GM10248 (cell line): ENCODE measurements at regions of chr3 and their contacts with region 1.

Region 1: DNA sequence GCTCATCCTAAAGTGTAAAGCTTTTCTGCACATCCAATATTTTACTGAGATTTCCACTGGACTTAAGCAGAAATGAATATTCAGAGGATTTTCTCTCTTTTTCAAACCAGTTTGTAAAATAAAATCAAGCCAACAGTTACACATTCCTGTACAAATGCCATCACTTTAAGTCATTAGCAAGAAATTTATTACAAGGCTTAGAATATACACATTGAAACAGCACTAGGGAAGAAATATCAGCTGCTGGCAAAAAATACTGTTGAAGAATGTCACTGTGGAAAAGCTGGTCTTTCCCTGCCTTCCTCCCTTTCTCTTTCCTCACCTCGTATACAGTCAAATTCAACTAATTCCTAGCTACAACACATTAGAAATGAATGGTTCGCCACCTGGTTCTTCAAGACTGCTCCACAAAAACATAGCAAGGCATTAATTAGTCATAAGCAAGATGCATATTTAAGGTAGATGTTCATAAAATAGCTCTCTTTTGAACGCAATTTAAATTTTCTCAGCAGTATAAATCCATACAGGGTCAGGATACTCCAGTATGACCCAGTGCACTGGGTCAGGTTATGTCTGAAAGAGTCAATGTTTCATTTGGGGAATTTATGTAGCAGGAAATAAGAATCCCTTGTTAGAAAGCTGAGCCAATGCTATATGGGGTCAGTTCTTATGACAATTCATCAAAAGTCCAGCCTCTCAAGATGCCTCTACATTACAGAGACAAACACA is 21.2 kb downstream of the PLOD2 start:
- DNase-seq: no peak
- CTCF ChIP-seq: no peak

Region 2: DNA sequence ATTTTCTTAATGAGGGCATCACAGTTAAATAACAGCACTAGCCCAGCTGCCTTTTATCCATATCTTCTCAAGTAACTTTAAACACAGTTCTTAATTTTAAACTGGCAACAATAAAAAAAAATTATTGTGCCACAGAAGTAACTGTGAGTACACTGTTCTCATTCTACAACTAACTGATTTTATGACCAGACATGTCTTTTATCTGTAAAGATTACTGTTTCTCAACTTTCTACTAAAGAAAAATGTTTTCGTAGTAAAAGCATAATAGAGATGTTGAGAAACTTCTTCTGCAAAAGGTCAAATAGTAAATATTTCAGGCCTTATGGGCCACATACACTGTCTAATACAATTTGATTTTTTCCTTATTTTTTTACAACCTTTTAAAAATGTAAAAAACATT is 10.8 kb before region 1 on chr3:
- CTCF ChIA-PET with region 1: interaction called, 12 read pairs
- POLR2A ChIA-PET with region 1: no interaction called
- DNase-seq: no peak
- CTCF ChIP-seq: no peak